HCT116 (cell line): ENCODE measurements at regions of chr6 and their contacts with region 1.

Region 1: DNA sequence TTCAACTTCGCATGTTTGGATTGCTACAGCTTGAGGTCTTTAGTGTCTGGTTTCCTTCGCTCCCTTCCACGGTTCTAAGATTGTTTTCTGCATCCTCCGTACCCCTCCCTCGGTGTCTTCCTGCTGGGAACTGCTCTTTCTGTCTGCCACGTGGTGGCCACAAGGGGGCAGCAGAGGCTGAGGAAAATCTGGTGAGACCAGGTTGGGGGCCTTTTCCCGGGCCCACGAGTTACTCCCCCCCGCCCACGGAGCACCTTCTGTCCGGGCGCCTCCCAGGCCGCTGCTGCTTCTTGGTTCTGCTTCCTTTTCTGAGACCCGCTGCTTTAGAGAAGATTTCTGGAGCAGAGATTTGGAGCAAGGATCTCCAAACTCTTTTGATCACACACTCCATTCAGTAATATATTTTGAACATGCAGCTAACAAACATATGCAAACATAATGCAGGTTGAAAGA is 21.1 kb upstream of the NOTCH4 start:
- DNase-seq: peak; percentile 56
- ATAC-seq: peak; percentile 95
- H3K4me3 ChIP-seq: peak overlapping the region; percentile 25 to 46
- H3K27ac ChIP-seq: no peak overlapping the region
- H3K4me1 ChIP-seq: peaks cover 0 to 14% of the 10 kb centered on the region in 2 experiments; a peak in 3 of 4 replicates
- H3K27me3 ChIP-seq: no peaks in the 10 kb centered on the region
- CTCF ChIP-seq: peak; percentile 87 to 96 (median 88)
- POLR2A ChIP-seq: no peak
- RAD21 ChIP-seq: peak; percentile 95

Region 2: GRCh38 chr6:32118782-32119628 is 126.0 kb before region 1 on chr6:
- CTCF ChIA-PET with region 1: no interaction called
- POLR2A ChIA-PET with region 1: no interaction called
- RAD21 ChIA-PET with region 1: no interaction called
- intact Hi-C with region 1: loop called (anchors 5 kb)
- DNase-seq: peak; percentile 59
- ATAC-seq: peak; percentile 94
- H3K4me3 ChIP-seq: no peak overlapping the region
- H3K27ac ChIP-seq: no peak overlapping the region; the same call in 1 of the 2 replicates
- H3K4me1 ChIP-seq: peaks cover 0 to 21% of the 10 kb centered on the region in 2 experiments; a peak in 2 of 4 replicates
- H3K27me3 ChIP-seq: no peaks in the 10 kb centered on the region
- CTCF ChIP-seq: peak; percentile 83 to 98 (median 92)
- POLR2A ChIP-seq: no peak
- RAD21 ChIP-seq: peak; percentile 94

Region 3: GRCh38 chr6:32148289-32149091 is 96.5 kb before region 1 on chr6:
- CTCF ChIA-PET with region 1: no interaction called
- POLR2A ChIA-PET with region 1: no interaction called
- RAD21 ChIA-PET with region 1: no interaction called
- intact Hi-C with region 1: no loop called
- DNase-seq: no peak
- ATAC-seq: peak; percentile 34; the same call in 1 of the 2 replicates
- H3K4me3 ChIP-seq: no peak overlapping the region
- H3K27ac ChIP-seq: no peak overlapping the region
- H3K4me1 ChIP-seq: peaks cover 7 to 15% of the 10 kb centered on the region in 2 experiments; a peak in 3 of 4 replicates
- H3K27me3 ChIP-seq: no peaks in the 10 kb centered on the region
- CTCF ChIP-seq: 0 out of 6 replicates have a peak, but pooled peaks of 1 of the 3 experiments have one; percentile 18
- POLR2A ChIP-seq: no peak
- RAD21 ChIP-seq: no peak

Region 4: DNA sequence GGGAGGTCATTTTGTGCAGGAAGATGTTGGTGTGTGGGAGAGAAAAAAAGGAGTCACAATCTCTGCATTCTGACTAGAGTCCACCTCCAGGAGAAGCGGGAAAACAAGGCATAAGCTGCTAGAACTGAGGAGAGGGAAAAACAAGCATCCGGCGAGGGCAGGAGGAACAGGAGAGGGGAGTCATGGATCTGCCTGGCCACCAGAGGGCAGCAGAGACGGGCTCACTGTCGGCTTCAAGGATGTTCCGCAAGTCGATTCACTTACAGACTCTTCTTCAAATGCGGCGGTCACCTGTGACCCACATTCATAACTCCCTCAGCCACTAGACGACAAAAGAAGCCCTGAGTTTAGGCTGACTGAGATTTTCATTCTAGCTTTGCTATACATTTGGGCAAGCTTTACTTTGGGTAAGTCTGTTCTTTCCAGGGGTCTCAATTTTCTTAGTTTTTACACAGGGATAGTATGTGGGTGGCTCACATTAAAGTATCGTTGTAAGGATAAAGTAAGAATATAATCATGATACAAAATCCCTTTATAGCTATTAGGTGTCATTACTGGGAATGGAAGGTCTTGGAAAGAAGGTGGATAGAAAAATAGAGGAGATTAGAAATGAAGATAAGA is 168.6 kb after region 1 on chr6:
- CTCF ChIA-PET with region 1: interaction called, 4 read pairs
- POLR2A ChIA-PET with region 1: no interaction called
- RAD21 ChIA-PET with region 1: no interaction called
- intact Hi-C with region 1: loop called (anchors 1 kb)
- DNase-seq: peak; percentile 69
- ATAC-seq: peak; percentile 85
- H3K4me3 ChIP-seq: no peak overlapping the region; a peak in 1 of 4 replicates
- H3K27ac ChIP-seq: no peak overlapping the region
- H3K4me1 ChIP-seq: peaks cover 0 to 12% of the 10 kb centered on the region in 2 experiments; a peak in 2 of 4 replicates
- H3K27me3 ChIP-seq: no peaks in the 10 kb centered on the region
- CTCF ChIP-seq: peak; percentile 73 to 91 (median 88)
- POLR2A ChIP-seq: no peak
- RAD21 ChIP-seq: peak; percentile 89

Region 5: GRCh38 chr6:32700391-32701040 is 455.5 kb after region 1 on chr6:
- CTCF ChIA-PET with region 1: interaction called, 10 read pairs
- POLR2A ChIA-PET with region 1: no interaction called
- RAD21 ChIA-PET with region 1: no interaction called
- intact Hi-C with region 1: no loop called
- DNase-seq: peak; percentile 61
- ATAC-seq: peak; percentile 93
- H3K4me3 ChIP-seq: no peak overlapping the region
- H3K27ac ChIP-seq: no peak overlapping the region
- H3K4me1 ChIP-seq: no peaks in the 10 kb centered on the region
- H3K27me3 ChIP-seq: no peaks in the 10 kb centered on the region
- CTCF ChIP-seq: peak; percentile 68 to 83 (median 75)
- POLR2A ChIP-seq: no peak
- RAD21 ChIP-seq: peak; percentile 87

Region 6: DNA sequence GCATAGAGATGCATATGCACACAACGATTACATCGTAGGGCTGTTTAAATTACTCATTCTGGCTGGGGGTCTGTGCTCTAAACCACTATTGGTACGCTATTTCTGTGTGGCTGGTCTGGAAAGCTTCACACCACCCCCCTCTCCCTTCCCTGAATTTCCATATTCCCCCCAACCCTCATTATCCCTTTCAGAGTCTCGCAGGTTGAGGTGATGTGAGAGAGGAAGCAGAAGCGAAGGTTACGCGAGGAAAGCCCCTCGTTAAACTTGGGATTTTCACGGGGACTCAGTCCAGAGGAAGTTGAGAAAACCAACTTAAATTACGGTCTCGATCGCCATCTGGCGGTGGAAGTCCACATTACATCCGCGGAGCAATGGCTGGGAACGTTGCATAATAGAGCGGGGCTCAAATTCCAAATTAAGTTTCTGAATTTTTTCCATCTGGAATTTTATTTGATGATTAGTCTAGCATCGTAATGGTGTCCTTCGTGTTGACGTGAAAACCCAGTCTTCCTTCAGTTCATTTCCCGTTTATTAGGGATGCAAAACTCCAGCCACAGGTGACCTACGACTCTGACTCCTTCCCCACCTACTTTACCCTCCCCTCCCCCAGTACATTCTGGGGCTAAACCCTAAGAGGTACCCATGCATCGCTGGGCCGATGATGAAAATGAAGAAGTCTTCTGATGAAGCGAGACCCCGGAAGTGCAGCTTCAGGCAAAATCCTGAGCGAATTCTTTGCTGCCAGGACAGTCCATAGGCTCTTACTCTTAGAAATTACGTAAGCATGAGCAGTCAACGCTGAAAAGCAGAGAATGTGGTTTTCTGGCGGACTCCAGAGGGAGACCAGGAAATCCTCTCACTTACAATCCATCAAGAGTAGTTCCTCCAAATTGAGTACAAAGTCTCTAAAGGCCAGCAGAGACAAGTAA is 552.1 kb after region 1 on chr6:
- CTCF ChIA-PET with region 1: no interaction called
- POLR2A ChIA-PET with region 1: no interaction called
- RAD21 ChIA-PET with region 1: no interaction called
- intact Hi-C with region 1: loop called (anchors 2 kb)
- DNase-seq: peak; percentile 31
- ATAC-seq: peak; percentile 93
- H3K4me3 ChIP-seq: peak overlapping the region; percentile 24 to 45
- H3K27ac ChIP-seq: no peak overlapping the region
- H3K4me1 ChIP-seq: peaks cover 0 to 5% of the 10 kb centered on the region in 2 experiments; a peak in 1 of 4 replicates
- H3K27me3 ChIP-seq: peaks cover 34% of the 10 kb centered on the region
- CTCF ChIP-seq: peak; percentile 67 to 91 (median 72); a peak in 5 of 6 replicates
- POLR2A ChIP-seq: no peak
- RAD21 ChIP-seq: peak; percentile 86